Dendritic cell treated with granulocyte-macrophage colony-stimulating factor and Interleukin-4, amounts not matched to agents 40 ng/mL and 50 ng/mL, for 4 days (primary cell): ENCODE measurements at regions of chr1 and their contacts with region 1.

Region 1: GRCh38 chr1:234373064-234373958 is at the start of gene COA6:
- H3K4me3 Mint-ChIP-seq: peak within 1 kb of the TSS; percentile 96
- H3K27ac Mint-ChIP-seq: peak within 1 kb of the TSS; percentile 96
- H3K4me1 Mint-ChIP-seq: peaks cover 16% of the 10 kb centered on the region
- H3K27me3 Mint-ChIP-seq: no peaks in the 10 kb centered on the region

Region 2: DNA sequence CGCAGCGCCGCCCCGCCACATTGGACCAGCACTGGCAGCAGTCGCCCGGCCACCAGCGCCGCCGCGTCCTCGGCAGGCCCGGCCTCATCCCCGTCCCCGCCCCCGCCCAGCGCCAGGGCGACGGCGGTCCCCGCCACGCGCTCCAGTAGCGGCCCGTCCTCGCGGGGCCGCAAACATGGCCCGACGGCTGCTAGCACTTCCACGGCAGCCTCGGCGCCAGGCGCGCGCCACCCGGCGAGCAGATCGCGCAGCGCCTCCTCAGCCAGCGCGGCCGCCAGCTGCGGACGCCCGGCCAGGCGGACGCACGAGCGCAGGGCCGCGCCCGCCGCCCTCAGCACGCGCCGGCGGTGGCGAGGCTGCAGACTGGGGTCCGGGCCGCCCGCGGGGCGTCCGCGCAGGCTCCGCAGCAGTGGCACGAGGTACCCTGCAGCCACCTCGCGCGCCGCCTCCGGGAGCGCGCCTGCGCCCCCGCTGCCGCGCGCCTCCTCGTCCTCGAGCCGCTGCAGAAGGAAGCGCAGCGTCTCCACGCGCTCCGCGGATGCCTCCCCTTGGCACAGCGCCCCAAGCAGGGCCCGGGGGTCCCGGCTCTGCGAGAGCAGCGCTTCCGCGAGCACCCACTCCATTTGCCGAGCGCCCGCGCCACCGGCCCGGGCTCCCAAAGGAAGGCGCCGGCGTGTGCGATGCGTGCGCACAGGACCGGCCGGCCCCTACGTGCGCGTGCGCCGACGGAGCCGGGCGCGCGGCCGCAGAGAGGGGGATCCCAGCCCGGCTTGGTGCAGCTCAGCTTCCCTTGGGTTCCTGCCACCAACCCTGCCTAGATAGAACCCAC is 105.4 kb after region 1 on chr1 and contains the start of gene TARBP1:
- intact Hi-C with region 1: loop called (anchors 10 kb)
- H3K4me3 Mint-ChIP-seq: peak within 1 kb of the TSS; percentile 81
- H3K27ac Mint-ChIP-seq: peak within 1 kb of the TSS; percentile 85
- H3K4me1 Mint-ChIP-seq: peaks cover 36% of the 10 kb centered on the region
- H3K27me3 Mint-ChIP-seq: peaks cover 15% of the 10 kb centered on the region